ENCODE measurements at regions of chr17 and their contacts with region 1.

Region 1: GRCh38 chr17:44642834-44643233 is 13.4 kb upstream of the MEIOC start:
- DNase-seq: no peak
- H3K4me3 ChIP-seq: no peak overlapping the region
- H3K27ac ChIP-seq: no peak overlapping the region
- H3K4me1 ChIP-seq: no peaks in the 10 kb centered on the region
- H3K27me3 ChIP-seq: no peaks in the 10 kb centered on the region
- CTCF ChIP-seq: no peak

Region 2: GRCh38 chr17:44487170-44487569 is 155.7 kb before region 1 on chr17:
- CTCF ChIA-PET with region 1: no interaction called
- POLR2A ChIA-PET with region 1: no interaction called
- intact Hi-C with region 1: no loop called
- DNase-seq: no peak
- H3K4me3 ChIP-seq: no peak overlapping the region
- H3K27ac ChIP-seq: no peak overlapping the region
- H3K4me1 ChIP-seq: no peaks in the 10 kb centered on the region
- H3K27me3 ChIP-seq: no peaks in the 10 kb centered on the region
- CTCF ChIP-seq: no peak

Region 3: GRCh38 chr17:44518032-44518431 is 124.8 kb before region 1 on chr17:
- CTCF ChIA-PET with region 1: interaction called, 14 read pairs
- POLR2A ChIA-PET with region 1: no interaction called
- intact Hi-C with region 1: no loop called
- DNase-seq: no peak
- H3K4me3 ChIP-seq: no peak overlapping the region
- H3K27ac ChIP-seq: no peak overlapping the region
- H3K4me1 ChIP-seq: no peaks in the 10 kb centered on the region
- H3K27me3 ChIP-seq: no peaks in the 10 kb centered on the region
- CTCF ChIP-seq: no peak

Region 4: DNA sequence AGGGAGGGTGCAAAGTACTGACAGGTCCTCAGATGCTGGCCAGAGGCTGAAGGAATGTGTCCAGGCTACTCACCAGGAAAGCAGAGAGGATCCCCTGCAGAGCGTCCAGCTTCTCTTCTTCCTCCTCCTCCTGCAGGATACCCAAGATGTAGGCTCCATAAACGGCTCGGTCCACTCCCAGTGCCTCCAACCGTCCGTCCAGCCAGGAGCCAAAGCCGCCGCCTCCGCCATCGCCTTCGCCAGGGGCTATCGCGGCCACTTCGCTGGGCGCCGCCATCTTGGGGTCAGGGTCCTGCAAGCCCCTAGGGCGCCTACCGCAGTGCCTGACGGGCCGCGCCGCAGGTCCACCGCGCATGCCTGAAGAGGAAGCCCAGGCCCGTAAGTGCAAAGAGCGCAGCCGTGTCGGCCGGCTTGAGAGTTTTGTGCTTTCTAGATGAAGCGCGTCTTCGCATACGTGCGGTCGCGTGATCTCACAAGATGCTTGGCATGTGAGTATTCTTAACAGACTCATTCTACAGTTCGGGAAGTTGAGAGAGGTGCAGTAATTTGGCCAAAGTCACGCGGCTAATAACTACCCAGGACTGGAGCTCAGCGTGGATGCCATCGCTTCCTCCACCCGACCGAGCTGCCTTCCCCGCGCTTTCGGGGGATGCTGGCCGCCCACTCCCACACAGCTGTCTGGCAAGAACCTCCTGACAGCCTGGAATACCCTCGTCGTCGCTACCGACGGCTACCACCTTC is 46.8 kb after region 1 on chr17 and contains the start of gene CCDC43:
- CTCF ChIA-PET with region 1: no interaction called
- POLR2A ChIA-PET with region 1: no interaction called
- intact Hi-C with region 1: no loop called
- DNase-seq: peak; percentile 81 to 90
- H3K4me3 ChIP-seq: peak within 1 kb of the TSS; percentile 100
- H3K27ac ChIP-seq: peak within 1 kb of the TSS; percentile 55
- H3K4me1 ChIP-seq: peaks cover 14% of the 10 kb centered on the region
- H3K27me3 ChIP-seq: no peaks in the 10 kb centered on the region
- CTCF ChIP-seq: no peak
- total RNA-seq, gene CCDC43: 19.9 and 23.4 TPM in 2 replicates

Region 5: GRCh38 chr17:44947461-44948314 is 304.9 kb after region 1 on chr17 and contains the start of gene KIF18B:
- CTCF ChIA-PET with region 1: no interaction called
- POLR2A ChIA-PET with region 1: interaction called, 31 read pairs
- intact Hi-C with region 1: no loop called
- DNase-seq: peak; percentile 87 to 88
- H3K4me3 ChIP-seq: peak within 1 kb of the TSS; percentile 86
- H3K27ac ChIP-seq: peak within 1 kb of the TSS; percentile 41; the same call in 1 of the 2 replicates
- H3K4me1 ChIP-seq: peaks cover 27% of the 10 kb centered on the region
- H3K27me3 ChIP-seq: no peaks in the 10 kb centered on the region
- CTCF ChIP-seq: no peak
- total RNA-seq, gene KIF18B: 48.2 and 58.5 TPM in 2 replicates

Region 6: DNA sequence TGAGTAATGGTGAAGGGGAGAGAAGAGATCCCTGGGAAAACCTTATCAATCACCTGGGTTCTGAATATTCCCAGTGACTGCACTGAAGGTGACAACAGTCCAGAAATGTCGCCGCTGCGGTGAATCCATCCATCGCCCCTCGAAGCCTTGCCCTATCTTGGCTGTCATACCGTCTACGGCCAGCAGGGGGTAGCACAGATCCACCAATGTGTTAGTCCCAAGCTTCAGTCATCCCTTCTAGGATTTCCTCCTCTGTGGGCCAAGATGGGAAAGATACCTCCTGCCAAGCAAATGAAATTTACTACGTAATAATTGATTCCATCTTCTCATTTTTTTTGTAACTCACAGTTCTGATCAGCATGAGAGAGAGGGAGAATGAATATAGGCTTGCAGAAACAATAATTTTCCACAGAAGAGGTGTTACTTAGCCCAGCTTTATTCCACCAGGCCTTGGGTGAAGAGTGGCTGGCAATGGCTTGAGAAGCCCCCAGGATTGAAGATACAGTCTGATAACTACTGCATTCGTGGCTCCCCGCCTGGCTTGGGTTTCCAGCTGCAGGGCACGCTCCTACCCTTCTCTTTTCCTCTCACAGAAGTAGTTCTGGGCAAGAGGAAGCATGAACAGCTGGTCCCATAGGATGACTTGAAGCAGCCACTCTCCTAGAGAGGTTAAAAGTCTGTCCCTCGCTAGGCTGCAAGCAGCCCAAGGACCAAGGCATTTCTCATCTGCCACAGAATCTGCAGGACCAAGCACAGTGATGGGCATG is 576.2 kb after region 1 on chr17:
- CTCF ChIA-PET with region 1: no interaction called
- POLR2A ChIA-PET with region 1: no interaction called
- intact Hi-C with region 1: no loop called
- DNase-seq: peak; percentile 57 to 80
- H3K4me3 ChIP-seq: no peak overlapping the region
- H3K27ac ChIP-seq: no peak overlapping the region
- H3K4me1 ChIP-seq: peaks cover 8% of the 10 kb centered on the region; the same call in 1 of the 2 replicates
- H3K27me3 ChIP-seq: no peaks in the 10 kb centered on the region
- CTCF ChIP-seq: peak; percentile 98